Heart right ventricle (tissue), 16 donors: ENCODE measurements at regions of chr3 and their contacts with region 1.

Region 1: GRCh38 chr3:12135029-12135657 is 23.6 kb downstream of the TIMP4 start:
- DNase-seq: peak; percentile 55 to 76
- ATAC-seq: peak; percentile 75 to 89 (median 81)
- H3K4me3 ChIP-seq: no peak overlapping the region
- H3K27ac ChIP-seq: peak overlapping the region in 2 of 10 donors; percentile 18 to 19
- H3K4me1 ChIP-seq: peaks cover 3 to 31% (median 20%) of the 10 kb centered on the region in 9 donors
- H3K27me3 ChIP-seq: peaks cover 0 to 12% (median 0%) of the 10 kb centered on the region in 7 donors
- CTCF ChIP-seq: peak; percentile 80 to 96 (median 92)

Region 2: DNA sequence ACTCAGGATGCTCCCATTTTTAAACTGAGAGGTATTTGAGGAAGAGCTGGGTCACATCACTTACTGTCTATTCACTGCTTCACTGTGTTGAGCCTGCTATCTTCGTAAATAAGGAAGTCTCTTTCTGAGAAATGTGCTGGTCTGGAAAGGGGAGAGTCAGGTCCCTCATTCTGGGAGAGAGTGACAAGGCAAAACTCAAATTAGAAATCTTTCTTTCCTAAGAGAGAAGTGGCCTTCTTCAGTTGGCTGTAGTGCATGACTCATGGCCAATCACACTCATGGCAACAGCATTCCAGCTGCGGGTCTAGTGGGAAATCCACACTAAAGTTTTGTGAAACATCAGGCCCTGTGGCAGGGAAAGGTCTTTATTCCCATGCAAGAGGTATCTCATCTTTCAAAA is 35.1 kb after region 1 on chr3:
- intact Hi-C with region 1: loop called in 4 of 10 experiments (anchors 1 to 5 kb)
- DNase-seq: no peak
- ATAC-seq: peak in 4 of 8 donors; percentile 20 to 85 (median 30)
- H3K4me3 ChIP-seq: no peak overlapping the region
- H3K27ac ChIP-seq: peak overlapping the region in 2 of 10 donors; percentile 28 to 34
- H3K4me1 ChIP-seq: peaks cover 0 to 16% (median under 1%) of the 10 kb centered on the region in 9 donors
- H3K27me3 ChIP-seq: no peaks in the 10 kb centered on the region
- CTCF ChIP-seq: no peak

Region 3: DNA sequence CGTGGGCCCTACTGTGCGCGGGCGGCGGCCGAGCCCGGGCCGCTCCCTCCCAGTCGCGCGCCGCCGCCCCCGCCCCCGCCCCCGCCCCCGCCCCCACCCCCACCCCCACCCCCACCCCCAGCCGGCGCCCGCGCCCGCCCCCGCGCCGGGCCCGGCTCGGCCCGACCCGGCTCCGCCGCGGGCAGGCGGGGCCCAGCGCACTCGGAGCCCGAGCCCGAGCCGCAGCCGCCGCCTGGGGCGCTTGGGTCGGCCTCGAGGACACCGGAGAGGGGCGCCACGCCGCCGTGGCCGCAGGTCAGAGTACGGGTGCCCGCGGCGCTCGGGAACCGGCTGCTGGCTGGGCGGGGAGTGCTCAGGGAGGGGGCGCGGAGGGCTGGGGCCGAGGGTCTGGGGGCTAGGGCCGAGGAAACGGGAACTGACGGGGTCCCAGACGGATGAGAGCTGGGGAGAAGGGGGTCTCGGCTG is 152.6 kb after region 1 on chr3:
- intact Hi-C with region 1: loop called in 4 of 10 experiments (anchors 5 to 10 kb)
- DNase-seq: peak; percentile 47 to 71
- ATAC-seq: peak; percentile 82 to 94 (median 88)
- H3K4me3 ChIP-seq: peak overlapping the region; percentile 53 to 97 (median 92)
- H3K27ac ChIP-seq: peak overlapping the region; percentile 75 to 96 (median 90)
- H3K4me1 ChIP-seq: peaks cover 0 to 39% (median 24%) of the 10 kb centered on the region in 9 donors
- H3K27me3 ChIP-seq: peaks cover 0 to 32% (median 0%) of the 10 kb centered on the region in 7 donors
- CTCF ChIP-seq: peak in 2 of 9 donors; percentile 10 to 17

Region 4: DNA sequence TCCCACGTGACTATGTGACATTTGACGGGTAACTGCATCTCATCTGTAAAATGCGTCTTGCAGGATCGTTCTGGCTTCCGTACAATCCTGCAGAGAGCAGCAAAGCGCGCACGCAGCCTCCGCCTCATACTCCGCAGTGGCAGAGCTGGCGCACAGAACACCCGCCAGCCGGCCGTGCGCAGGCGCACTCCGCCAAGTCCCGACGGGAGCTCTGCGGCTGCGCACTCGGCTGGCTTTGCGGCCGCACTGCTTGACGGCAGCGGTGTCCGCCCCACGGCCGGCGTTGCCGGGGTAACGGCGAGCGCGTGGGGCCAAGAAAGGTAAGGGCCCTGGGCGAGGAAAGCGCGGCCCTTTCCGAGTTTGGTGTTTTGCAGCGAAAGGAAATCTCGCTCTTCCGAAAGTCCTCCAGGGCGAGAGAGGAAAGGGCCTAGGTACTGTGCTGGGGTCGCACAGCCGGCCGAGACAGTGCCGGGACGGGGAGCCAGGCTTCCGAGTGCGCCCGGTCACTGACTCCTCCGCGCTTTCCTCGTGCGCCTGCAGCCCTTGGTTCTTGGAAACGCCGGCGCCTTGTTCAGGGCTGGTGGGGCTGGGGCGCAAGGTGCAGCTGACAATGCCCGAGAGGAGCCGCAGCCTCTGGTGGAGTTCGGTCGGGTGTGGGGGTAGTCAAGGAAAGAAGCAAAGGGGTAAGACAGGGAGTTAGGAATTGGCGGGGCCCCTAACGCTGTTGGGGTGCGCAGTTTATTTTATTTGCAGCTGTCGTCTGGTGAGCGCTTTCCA is 349.2 kb after region 1 on chr3 and contains the start of gene TSEN2:
- intact Hi-C with region 1: loop called in 9 of 10 experiments (anchors 1 to 5 kb)
- DNase-seq: peak; percentile 89 to 97
- ATAC-seq: peak; percentile 94 to 97 (median 95)
- H3K4me3 ChIP-seq: peak within 1 kb of the TSS; percentile 45 to 88 (median 64)
- H3K27ac ChIP-seq: peak within 1 kb of the TSS in 9 of 10 donors; percentile 64 to 89 (median 82)
- H3K4me1 ChIP-seq: peaks cover 3 to 41% (median 25%) of the 10 kb centered on the region in 9 donors
- H3K27me3 ChIP-seq: no peaks in the 10 kb centered on the region
- CTCF ChIP-seq: peak in 6 of 9 donors; percentile 7 to 47 (median 32)
- total RNA-seq, gene TSEN2: 15.7 to 33.7 (median 19.8) TPM

Region 5: GRCh38 chr3:12601072-12601471 is 465.9 kb after region 1 on chr3:
- intact Hi-C with region 1: no loop called
- DNase-seq: no peak
- ATAC-seq: no peak
- H3K4me3 ChIP-seq: no peak overlapping the region
- H3K27ac ChIP-seq: peak overlapping the region in 1 of 10 donors; percentile 5
- H3K4me1 ChIP-seq: peaks cover 0 to 20% (median 0%) of the 10 kb centered on the region in 9 donors
- H3K27me3 ChIP-seq: no peaks in the 10 kb centered on the region
- CTCF ChIP-seq: peak in 4 of 9 donors; percentile 17 to 43 (median 41)